ENCODE measurements at regions of chr19 and their contacts with region 1.

Region 1: DNA sequence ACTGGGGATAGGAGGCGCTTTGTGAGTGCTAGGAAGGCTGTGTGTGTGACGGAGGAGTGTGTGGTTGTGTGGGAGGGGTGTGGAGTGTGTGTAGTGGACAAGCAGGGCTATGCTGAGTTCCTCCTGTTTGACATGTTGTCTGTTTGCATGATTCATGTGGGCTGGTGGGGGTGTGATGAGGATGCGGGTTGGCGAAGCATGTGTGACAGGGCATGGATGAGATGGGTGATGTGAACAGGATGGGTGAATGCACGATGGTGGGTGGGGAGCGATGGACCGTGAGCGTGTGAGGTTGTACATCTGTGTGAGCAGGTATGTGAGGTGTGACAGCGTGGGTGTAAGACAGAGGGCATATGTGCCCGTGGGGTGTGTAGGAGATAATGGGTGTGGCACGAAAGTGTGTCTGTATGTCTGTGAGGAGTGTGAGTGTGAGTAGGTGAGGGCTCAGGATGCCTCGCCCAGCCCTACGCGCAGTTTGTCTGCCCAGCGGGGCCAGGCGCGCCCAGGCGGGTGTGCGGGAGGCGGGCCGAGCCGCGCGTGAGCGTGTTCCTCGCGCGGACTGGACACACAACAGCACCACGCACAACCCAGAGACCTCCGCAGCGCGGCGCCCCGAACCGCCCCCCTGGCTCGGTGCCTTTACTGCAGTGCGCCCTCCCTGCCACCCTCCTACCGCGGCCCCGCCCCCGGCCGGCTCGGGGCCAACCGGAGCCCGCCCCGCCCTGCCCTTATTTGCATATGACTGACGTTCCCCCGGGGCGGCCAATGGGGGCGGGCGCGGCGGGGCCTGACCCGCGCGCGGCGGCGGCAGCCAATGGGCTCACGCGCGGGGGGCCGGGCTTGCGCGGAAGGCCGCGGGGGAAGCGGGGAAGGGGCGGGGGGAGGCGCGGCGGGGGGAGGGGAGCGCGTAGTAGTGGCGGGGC is 14.4 kb downstream of the CIC start:
- DNase-seq: peak; percentile 97 to 98 (median 98)
- ATAC-seq: peak; percentile 49 to 76 (median 70)
- H3K4me3 ChIP-seq: peak overlapping the region; percentile 21 to 86 (median 60)
- H3K27ac ChIP-seq: peak overlapping the region; percentile 95 to 100 (median 96)
- H3K4me1 ChIP-seq: peaks cover 23 to 75% (median 65%) of the 10 kb centered on the region in 12 donors
- H3K27me3 ChIP-seq: no peaks in the 10 kb centered on the region
- CTCF ChIP-seq: peak in 2 of 12 donors; percentile 11 to 13
- POLR2A ChIP-seq: peak in 1 of 2 donors; percentile 46

Region 2: DNA sequence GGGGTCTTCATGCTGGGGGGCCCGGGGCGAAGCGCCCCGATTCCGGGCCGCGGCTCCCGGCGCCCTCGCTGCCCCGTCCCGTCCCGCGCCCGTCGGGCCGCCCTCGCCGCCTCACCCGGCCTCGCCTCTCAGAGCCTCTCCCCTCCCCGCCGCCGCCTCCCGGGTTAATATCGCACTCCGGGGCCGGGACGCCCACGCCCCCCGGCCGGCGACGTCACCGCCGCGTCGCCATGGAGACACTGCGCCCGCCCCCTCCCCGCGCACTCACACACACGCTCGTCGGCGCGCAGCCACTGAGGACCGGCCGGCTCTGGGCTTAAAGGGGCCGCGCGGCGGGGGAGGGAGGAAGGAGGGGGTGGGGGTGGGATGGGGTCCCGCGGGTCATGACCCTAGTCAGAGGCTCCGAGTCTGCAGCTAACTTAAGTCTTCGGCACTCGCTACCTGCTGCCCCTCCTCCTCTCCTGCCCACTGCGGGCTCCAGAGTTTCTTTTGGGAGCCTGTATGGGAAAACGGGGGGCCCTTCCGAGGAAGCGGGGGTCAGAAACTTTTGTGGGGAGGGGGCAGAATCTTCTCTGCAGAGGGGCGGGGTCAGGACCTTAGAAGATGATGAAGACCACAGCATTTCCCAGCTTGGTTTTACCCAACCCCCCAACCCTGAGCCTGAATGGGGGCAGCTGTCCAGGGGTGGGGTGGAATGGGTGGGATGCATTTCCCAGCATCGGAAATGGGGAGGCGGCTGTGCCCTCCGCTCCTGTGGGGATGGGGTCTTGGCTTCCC is 28.2 kb before region 1 on chr19 and contains the start of gene ERF:
- intact Hi-C with region 1: loop called in 4 of 10 experiments (anchors 1 to 2 kb)
- DNase-seq: peak; percentile 94 to 98 (median 96)
- ATAC-seq: peak; percentile 64 to 84 (median 80)
- H3K4me3 ChIP-seq: peak within 1 kb of the TSS; percentile 74 to 100 (median 94)
- H3K27ac ChIP-seq: peak within 1 kb of the TSS; percentile 94 to 100 (median 99)
- H3K4me1 ChIP-seq: peaks cover 10 to 52% (median 38%) of the 10 kb centered on the region in 12 donors
- H3K27me3 ChIP-seq: no peaks in the 10 kb centered on the region
- CTCF ChIP-seq: no peak
- POLR2A ChIP-seq: peak; percentile 98 to 100
- total RNA-seq, gene ERF: 26.1 to 49.7 (median 35.5) TPM

Region 3: GRCh38 chr19:42268704-42269477 is 14.5 kb before region 1 on chr19 and contains the start of gene CIC:
- intact Hi-C with region 1: loop called in 1 of 10 experiments (anchors 2 kb)
- DNase-seq: peak; percentile 100
- ATAC-seq: peak; percentile 88 to 94 (median 90)
- H3K4me3 ChIP-seq: peak within 1 kb of the TSS; percentile 40 to 81 (median 69)
- H3K27ac ChIP-seq: peak within 1 kb of the TSS; percentile 93 to 100 (median 97)
- H3K4me1 ChIP-seq: peaks cover 8 to 37% (median 29%) of the 10 kb centered on the region in 12 donors
- H3K27me3 ChIP-seq: no peaks in the 10 kb centered on the region
- CTCF ChIP-seq: no peak
- POLR2A ChIP-seq: no peak
- total RNA-seq, gene CIC: 25.5 to 54.8 (median 35.8) TPM

Region 4: GRCh38 chr19:42325273-42325895 is 42.0 kb after region 1 on chr19 and contains the start of gene MEGF8:
- intact Hi-C with region 1: loop called in 1 of 10 experiments (anchors 5 kb)
- DNase-seq: peak; percentile 97 to 99 (median 98)
- ATAC-seq: peak; percentile 97 to 99 (median 98)
- H3K4me3 ChIP-seq: peak within 1 kb of the TSS; percentile 68 to 98 (median 88)
- H3K27ac ChIP-seq: peak within 1 kb of the TSS; percentile 29 to 88 (median 81)
- H3K4me1 ChIP-seq: peaks cover 2 to 53% (median 25%) of the 10 kb centered on the region in 12 donors
- H3K27me3 ChIP-seq: peaks cover 10 to 25% (median 21%) of the 10 kb centered on the region in 9 donors
- CTCF ChIP-seq: peak; percentile 76 to 97 (median 84)
- POLR2A ChIP-seq: peak; percentile 4 to 85
- total RNA-seq, gene MEGF8: 26.5 to 50.4 (median 36.6) TPM